ENCODE measurements at regions of chr13 and their contacts with region 1.

Region 1: DNA sequence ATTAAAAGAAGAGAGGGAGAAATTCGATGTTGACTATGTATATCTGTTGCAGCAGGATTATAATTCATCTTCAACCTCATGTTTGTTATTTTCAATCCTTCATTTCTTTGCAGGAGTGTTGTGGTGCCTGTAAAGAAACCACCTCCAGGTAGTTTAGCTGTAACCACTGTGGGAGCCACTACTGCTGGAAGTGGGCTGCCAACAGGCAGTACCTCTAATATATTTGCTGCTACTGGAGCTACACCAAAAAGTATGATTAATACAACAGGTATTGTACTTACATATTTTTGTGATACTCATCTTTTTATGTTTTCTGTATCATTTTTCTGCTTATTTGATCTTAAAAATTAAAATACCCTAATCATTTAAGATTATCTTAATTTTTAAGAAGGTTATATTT is 266.5 kb downstream of the NBEA start:
- DNase-seq: no peak
- H3K4me3 ChIP-seq: no peak overlapping the region
- H3K27ac ChIP-seq: no peak overlapping the region
- H3K4me1 ChIP-seq: no peaks in the 10 kb centered on the region
- H3K27me3 ChIP-seq: no peaks in the 10 kb centered on the region
- CTCF ChIP-seq: no peak
- POLR2A ChIP-seq: no peak

Region 2: GRCh38 chr13:35283854-35284253 is 75.3 kb after region 1 on chr13:
- intact Hi-C with region 1: loop called (anchors 2 kb)
- DNase-seq: no peak
- H3K4me3 ChIP-seq: no peak overlapping the region
- H3K27ac ChIP-seq: no peak overlapping the region
- H3K4me1 ChIP-seq: no peaks in the 10 kb centered on the region
- H3K27me3 ChIP-seq: no peaks in the 10 kb centered on the region
- CTCF ChIP-seq: no peak
- POLR2A ChIP-seq: no peak

Measured in vagina (tissue), 2 donors.